ENCODE measurements at regions of chr17 and their contacts with region 1.

Region 1: DNA sequence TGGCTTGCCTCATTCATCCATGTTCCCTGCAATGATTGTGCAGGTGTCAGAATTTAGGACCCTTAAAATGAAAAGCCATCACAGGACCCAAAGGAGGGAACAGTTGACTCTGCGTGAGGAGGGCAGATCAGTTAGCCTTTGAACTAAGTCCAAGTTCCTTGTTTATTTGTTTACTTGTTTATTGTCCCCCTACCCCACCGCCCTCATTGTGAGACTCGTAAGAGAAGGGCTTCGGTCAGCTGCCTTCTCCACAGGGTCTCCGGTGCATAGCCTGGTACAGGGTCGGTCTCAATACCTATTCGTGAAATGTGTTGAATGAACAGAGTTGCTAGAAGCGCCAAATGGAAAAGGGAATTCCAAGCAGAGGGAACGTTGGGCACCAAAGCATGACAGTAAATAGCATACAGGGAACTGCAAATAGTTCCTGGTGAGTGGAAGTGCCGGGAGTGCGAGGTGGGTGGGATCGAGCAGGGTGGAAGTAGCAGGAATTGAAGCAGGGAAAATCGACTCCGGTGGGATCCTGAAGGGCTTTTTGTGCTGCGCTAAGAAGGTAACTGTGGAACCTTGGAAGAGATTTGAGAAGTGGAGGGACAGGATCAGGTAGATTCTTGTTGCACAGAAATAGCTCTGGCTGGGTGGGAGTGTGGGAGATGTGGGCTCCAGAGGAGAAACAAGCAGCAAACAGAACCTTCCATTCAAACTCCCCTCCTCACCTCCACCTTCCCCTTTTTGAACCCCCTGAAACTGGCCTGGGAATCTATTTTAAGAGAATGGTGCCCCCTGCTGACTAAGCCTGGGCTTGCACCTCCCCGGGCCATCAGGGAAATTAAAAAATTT is 12.7 kb downstream of the SLC35B1 start:
- DNase-seq: peak; percentile 75
- H3K4me3 Mint-ChIP-seq: no peak overlapping the region
- H3K27ac Mint-ChIP-seq: no peak overlapping the region
- H3K4me1 Mint-ChIP-seq: peaks cover 17% of the 10 kb centered on the region
- H3K27me3 Mint-ChIP-seq: peaks cover 26% of the 10 kb centered on the region
- CTCF ChIP-seq: peak; percentile 94

Region 2: GRCh38 chr17:49434821-49435670 is 260.0 kb before region 1 on chr17:
- CTCF ChIA-PET with region 1: no interaction called
- intact Hi-C with region 1: loop called (anchors 10 kb)
- DNase-seq: peak; percentile 81
- H3K4me3 Mint-ChIP-seq: no peak overlapping the region
- H3K27ac Mint-ChIP-seq: no peak overlapping the region
- H3K4me1 Mint-ChIP-seq: no peaks in the 10 kb centered on the region
- H3K27me3 Mint-ChIP-seq: peaks cover 65% of the 10 kb centered on the region
- CTCF ChIP-seq: peak; percentile 93